CD8-positive, alpha-beta T cell (primary cell): ENCODE measurements at regions of chr19 and their contacts with region 1.

Region 1: GRCh38 chr19:55476100-55476775 is at the start of gene ZNF628:
- DNase-seq: peak; percentile 95 to 99 (median 98)
- ATAC-seq: peak; percentile 93
- H3K4me3 ChIP-seq: peak within 1 kb of the TSS; percentile 70 to 72
- H3K4me3 Mint-ChIP-seq: peak within 1 kb of the TSS; percentile 85
- H3K27ac ChIP-seq: peak within 1 kb of the TSS; percentile 58 to 91
- H3K27ac Mint-ChIP-seq: peak within 1 kb of the TSS; percentile 88
- H3K4me1 ChIP-seq: peaks cover 17% of the 10 kb centered on the region
- H3K4me1 Mint-ChIP-seq: peaks cover 34% of the 10 kb centered on the region
- H3K27me3 ChIP-seq: no peaks in the 10 kb centered on the region
- H3K27me3 Mint-ChIP-seq: no peaks in the 10 kb centered on the region
- CTCF ChIP-seq: no peak
- total RNA-seq, gene ZNF628: 27.0 to 27.8 TPM

Region 2: GRCh38 chr19:54463531-54464043 is 1012.7 kb before region 1 on chr19 and contains the start of gene LENG9:
- CTCF ChIA-PET with region 1: no interaction called
- POLR2A ChIA-PET with region 1: no interaction called
- intact Hi-C with region 1: loop called in 1 of 2 experiments (anchors 10 kb)
- DNase-seq: peak; percentile 81 to 100 (median 91)
- ATAC-seq: peak; percentile 70
- H3K4me3 ChIP-seq: peak within 1 kb of the TSS; percentile 79 to 83
- H3K4me3 Mint-ChIP-seq: peak within 1 kb of the TSS; percentile 86
- H3K27ac ChIP-seq: peak within 1 kb of the TSS; percentile 81 to 84
- H3K27ac Mint-ChIP-seq: peak within 1 kb of the TSS; percentile 93
- H3K4me1 ChIP-seq: peaks cover 20% of the 10 kb centered on the region
- H3K4me1 Mint-ChIP-seq: peaks cover 36% of the 10 kb centered on the region
- H3K27me3 ChIP-seq: no peaks in the 10 kb centered on the region
- H3K27me3 Mint-ChIP-seq: no peaks in the 10 kb centered on the region
- CTCF ChIP-seq: no peak
- total RNA-seq, gene LENG9: 2.3 to 2.7 TPM

Region 3: DNA sequence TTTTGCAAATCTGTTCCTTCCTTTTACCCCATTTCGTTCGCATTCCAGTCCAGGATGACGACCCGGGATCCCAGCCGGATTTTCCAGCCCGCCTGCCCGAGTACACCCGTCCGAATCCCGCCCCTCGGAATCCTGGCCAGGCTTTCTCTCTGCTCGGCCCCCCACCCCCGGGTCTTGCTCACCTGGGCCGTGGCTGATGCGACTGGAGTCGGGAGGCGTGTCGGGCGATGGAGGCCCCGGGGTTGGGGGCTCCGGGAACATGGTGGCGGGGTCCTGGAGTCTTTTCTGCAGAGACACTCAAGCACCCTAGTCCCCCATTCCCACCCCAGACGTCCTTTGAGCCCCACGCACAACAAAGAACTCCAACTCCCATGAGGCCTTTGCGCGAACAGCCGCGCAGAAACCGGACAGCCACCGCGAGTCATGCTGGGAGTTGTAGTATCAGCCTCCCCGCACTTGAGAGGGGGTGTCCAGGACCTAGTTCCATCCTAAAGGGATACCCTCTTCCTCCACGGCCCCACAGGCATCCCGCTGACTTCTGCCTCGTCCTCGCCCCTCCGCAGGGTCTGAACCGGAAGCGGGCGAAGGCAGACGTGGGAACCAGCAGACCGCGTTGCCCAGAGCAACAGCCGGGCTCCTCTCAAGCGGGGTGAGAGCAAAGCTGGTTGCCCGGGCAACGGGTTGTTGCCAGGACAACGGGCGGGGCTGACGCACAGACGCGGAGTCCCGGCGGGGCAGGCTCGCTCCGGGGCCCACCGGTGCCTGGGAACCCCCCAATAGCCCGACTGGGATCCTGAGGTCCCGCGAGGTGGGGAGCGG is 297.2 kb before region 1 on chr19:
- CTCF ChIA-PET with region 1: no interaction called
- POLR2A ChIA-PET with region 1: no interaction called
- intact Hi-C with region 1: loop called in 1 of 2 experiments (anchors 1 kb)
- DNase-seq: peak; percentile 87 to 99 (median 96)
- ATAC-seq: peak; percentile 79
- H3K4me3 ChIP-seq: peak overlapping the region; percentile 39 to 44
- H3K4me3 Mint-ChIP-seq: peak overlapping the region; percentile 75
- H3K27ac ChIP-seq: peak overlapping the region; percentile 45 to 61
- H3K27ac Mint-ChIP-seq: peak overlapping the region; percentile 79
- H3K4me1 ChIP-seq: peaks cover 27% of the 10 kb centered on the region
- H3K4me1 Mint-ChIP-seq: peaks cover 23% of the 10 kb centered on the region
- H3K27me3 ChIP-seq: peaks cover 43 to 67% of the 10 kb centered on the region in 2 experiments
- H3K27me3 Mint-ChIP-seq: peaks cover 68% of the 10 kb centered on the region
- CTCF ChIP-seq: no peak

Region 4: DNA sequence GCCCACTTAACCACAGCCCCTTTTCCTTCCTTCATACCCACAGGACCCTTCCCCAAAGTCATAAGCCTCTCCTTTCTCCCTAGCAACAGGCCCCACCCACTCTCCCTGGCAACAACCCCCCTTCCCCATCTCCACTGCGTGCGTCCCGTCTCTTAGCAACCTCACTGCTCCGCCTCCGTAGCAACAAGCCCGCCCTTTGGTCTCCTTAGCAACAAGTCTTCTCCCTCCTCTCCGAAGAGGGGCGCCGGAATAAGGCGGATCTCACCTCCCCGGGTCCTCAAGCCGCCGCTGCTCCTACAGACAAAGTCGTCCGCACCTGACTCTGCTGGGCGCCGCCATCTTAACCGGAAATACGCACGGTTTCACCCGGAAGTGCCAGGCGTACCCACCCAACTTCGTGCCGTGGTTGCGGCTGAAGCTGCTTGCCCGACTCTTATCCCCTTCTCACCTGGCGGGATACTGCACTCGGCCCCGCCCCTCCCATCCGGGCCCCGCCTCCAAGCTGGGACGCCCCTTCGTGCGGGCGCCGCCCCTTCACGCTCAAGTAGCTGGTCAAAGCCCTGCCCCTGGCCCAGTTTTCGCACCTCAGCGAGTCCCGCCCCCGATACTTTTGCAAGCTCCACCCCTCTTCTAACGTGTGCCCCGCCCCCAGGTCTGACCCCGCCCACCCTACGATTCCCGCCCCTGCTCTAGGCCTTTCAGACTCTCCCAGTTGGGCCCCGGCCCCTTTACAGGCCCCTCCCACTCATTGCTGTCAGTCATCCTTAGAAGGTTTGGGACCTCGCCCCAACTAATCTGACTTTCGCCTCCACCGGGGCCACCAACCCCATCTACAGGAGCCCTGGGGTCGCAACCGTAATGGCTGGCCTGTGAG is 196.2 kb before region 1 on chr19 and contains the start of gene HSPBP1:
- CTCF ChIA-PET with region 1: no interaction called
- POLR2A ChIA-PET with region 1: no interaction called
- intact Hi-C with region 1: loop called in 1 of 2 experiments (anchors 1 kb)
- DNase-seq: peak; percentile 87 to 98 (median 95)
- ATAC-seq: peak; percentile 86
- H3K4me3 ChIP-seq: peak within 1 kb of the TSS; percentile 73 to 85
- H3K4me3 Mint-ChIP-seq: peak within 1 kb of the TSS; percentile 96
- H3K27ac ChIP-seq: peak within 1 kb of the TSS; percentile 89 to 90
- H3K27ac Mint-ChIP-seq: peak within 1 kb of the TSS; percentile 98
- H3K4me1 ChIP-seq: peaks cover 32% of the 10 kb centered on the region
- H3K4me1 Mint-ChIP-seq: peaks cover 44% of the 10 kb centered on the region
- H3K27me3 ChIP-seq: no peaks in the 10 kb centered on the region
- H3K27me3 Mint-ChIP-seq: no peaks in the 10 kb centered on the region
- CTCF ChIP-seq: no peak
- total RNA-seq, gene HSPBP1: 18.8 to 18.9 TPM

Region 5: DNA sequence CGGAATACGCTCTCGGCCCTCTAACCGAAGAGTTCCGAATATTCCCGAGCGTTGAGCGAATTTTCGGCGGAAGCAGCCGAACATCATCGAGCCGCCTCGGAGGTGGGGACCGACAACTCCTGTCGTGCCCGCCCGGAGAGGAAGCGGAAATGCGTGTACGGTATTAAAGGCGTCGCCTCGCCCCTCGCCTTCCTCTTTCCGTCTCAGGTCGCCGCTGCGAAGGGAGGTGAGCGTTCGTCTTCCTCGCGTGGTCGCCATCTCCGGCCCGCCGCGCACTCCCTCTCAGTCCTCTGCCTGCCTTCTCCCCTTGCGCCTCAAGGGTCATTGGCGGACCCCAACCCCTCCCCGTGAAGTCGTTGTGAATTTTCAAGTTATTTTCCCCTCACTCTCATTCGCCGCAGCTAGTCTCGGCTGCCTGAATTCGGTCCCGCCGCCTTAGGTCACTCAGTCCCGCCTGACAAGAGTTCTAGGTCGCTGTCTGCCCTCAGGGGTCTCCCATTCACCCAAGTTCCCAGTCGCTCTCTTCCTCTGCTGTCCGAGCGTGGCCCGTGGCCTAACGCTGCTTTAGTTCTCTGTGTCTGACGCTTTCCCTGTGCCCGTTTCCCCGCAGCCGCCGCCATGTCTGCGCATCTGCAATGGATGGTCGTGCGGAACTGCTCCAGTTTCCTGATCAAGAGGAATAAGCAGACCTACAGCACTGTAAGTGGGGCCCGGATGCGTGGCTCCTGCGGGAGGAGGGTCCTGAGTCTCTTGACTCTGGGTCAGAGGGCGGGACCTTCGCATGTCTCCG is 90.3 kb before region 1 on chr19 and contains the start of gene RPL28:
- CTCF ChIA-PET with region 1: no interaction called
- POLR2A ChIA-PET with region 1: interaction called, 3 read pairs
- intact Hi-C with region 1: loop called in 1 of 2 experiments (anchors 1 kb)
- DNase-seq: peak; percentile 97 to 99 (median 99)
- ATAC-seq: peak; percentile 80
- H3K4me3 ChIP-seq: peak within 1 kb of the TSS; percentile 75 to 94
- H3K4me3 Mint-ChIP-seq: peak within 1 kb of the TSS; percentile 100
- H3K27ac ChIP-seq: peak within 1 kb of the TSS; percentile 95 to 97
- H3K27ac Mint-ChIP-seq: peak within 1 kb of the TSS; percentile 100
- H3K4me1 ChIP-seq: peaks cover 59% of the 10 kb centered on the region
- H3K4me1 Mint-ChIP-seq: peaks cover 75% of the 10 kb centered on the region
- H3K27me3 ChIP-seq: no peaks in the 10 kb centered on the region
- H3K27me3 Mint-ChIP-seq: no peaks in the 10 kb centered on the region
- CTCF ChIP-seq: no peak
- total RNA-seq, gene RPL28: 4,227 to 4,270 TPM

Region 6: GRCh38 chr19:55461259-55461973 is 14.8 kb before region 1 on chr19 and contains the start of gene ISOC2:
- CTCF ChIA-PET with region 1: interaction called, 46 read pairs
- POLR2A ChIA-PET with region 1: interaction called, 9 read pairs
- intact Hi-C with region 1: loop called (anchors 1 kb)
- DNase-seq: peak; percentile 100
- ATAC-seq: peak; percentile 96
- H3K4me3 ChIP-seq: peak within 1 kb of the TSS; percentile 90 to 95
- H3K4me3 Mint-ChIP-seq: peak within 1 kb of the TSS; percentile 83
- H3K27ac ChIP-seq: peak within 1 kb of the TSS; percentile 70 to 87
- H3K27ac Mint-ChIP-seq: peak within 1 kb of the TSS; percentile 58
- H3K4me1 ChIP-seq: peaks cover 17% of the 10 kb centered on the region
- H3K4me1 Mint-ChIP-seq: peaks cover 19% of the 10 kb centered on the region
- H3K27me3 ChIP-seq: no peaks in the 10 kb centered on the region
- H3K27me3 Mint-ChIP-seq: no peaks in the 10 kb centered on the region
- CTCF ChIP-seq: no peak
- total RNA-seq, gene ISOC2: 1.5 to 2.1 TPM

Region 7: DNA sequence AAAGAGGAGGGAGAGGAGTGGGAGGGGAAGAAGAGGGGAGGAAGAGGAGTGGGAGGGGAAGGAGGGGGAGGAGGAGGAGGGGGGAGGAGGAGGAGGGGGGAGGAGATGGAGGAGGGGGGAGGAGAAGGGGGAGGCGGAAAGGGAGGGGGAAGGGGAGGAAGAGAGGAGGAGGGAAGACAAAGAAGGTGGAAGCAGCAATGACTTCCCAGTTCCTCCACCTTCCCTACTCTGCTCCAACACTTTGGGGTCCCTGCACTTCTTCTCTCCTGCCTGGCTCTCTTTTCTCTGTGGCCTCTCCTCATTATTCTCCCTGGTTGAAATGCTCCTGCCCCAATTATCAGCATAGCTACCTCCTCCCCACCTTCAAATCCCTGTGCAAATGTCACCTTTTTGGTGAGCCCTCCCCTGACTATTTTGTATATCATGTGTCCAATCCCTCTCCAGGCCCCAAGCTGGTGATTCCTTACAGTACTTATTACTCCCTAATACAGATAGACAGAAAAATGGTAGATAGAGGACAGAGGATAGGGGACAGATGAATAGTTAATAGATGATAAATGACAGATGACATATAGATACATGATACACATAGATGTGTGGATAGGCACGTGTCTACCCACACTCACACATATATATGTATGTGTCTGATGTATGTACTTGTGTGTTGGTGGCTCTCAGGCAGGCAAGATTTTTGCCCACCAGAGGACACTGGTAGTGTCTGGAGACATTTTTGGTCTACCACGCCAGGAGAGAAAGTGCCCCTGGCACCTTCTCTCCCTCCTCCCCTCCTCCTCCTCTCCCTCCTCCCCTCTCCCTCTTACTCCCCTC is 236.8 kb after region 1 on chr19:
- CTCF ChIA-PET with region 1: no interaction called
- POLR2A ChIA-PET with region 1: no interaction called
- intact Hi-C with region 1: no loop called
- DNase-seq: no peak
- ATAC-seq: no peak
- H3K4me3 ChIP-seq: no peak overlapping the region
- H3K4me3 Mint-ChIP-seq: no peak overlapping the region
- H3K27ac ChIP-seq: no peak overlapping the region
- H3K27ac Mint-ChIP-seq: no peak overlapping the region
- H3K4me1 ChIP-seq: no peaks in the 10 kb centered on the region
- H3K4me1 Mint-ChIP-seq: no peaks in the 10 kb centered on the region
- H3K27me3 ChIP-seq: peaks cover 0 to 2% of the 10 kb centered on the region in 2 experiments
- H3K27me3 Mint-ChIP-seq: peaks cover 17% of the 10 kb centered on the region
- CTCF ChIP-seq: no peak

Region 8: DNA sequence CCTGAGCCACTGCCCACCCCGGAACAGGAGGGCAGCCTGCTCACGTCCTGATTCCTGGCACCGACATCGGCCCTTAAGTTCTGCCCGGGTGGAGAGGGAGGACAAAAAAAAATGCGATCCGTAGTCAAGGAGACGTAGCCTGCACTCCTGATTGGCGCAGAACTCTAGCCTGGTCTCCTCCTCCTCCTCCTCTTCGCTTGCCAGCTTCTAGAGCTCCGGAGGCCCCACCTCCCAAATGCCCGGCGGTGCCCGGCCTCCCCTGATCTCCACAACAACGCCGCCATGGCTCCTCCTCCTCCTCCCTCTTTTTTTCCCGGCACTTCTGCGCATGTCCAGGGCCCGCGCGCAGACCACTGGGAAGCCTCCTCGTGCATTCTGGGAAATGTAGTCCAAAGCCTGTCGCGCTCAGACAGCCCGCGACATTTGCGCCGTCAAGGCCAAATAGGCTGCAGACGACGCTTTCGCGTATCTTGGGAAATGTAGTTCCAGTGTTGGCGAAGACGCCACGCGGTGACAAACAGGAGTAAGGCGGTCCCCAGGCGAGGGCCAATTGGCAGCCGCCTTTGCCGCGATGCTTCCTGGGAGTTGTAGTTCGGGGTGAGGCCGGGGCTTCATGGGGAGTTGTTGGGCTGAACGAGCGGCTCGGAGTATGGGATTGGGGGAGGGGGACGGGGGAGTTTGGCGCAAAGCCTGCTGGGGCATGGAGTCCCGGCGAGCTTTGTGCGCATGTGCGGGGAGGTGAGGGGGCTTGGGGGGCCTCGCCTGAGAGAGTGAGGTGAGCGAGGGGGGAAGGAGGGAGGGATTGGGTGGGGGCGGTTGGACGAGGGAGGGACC is 664.6 kb after region 1 on chr19 and contains the start of gene ZNF444:
- CTCF ChIA-PET with region 1: no interaction called
- POLR2A ChIA-PET with region 1: no interaction called
- intact Hi-C with region 1: loop called in 1 of 2 experiments (anchors 2 kb)
- DNase-seq: peak; percentile 98 to 100 (median 99)
- ATAC-seq: peak; percentile 84
- H3K4me3 ChIP-seq: peak within 1 kb of the TSS; percentile 69 to 74
- H3K4me3 Mint-ChIP-seq: peak within 1 kb of the TSS; percentile 92
- H3K27ac ChIP-seq: peak within 1 kb of the TSS; percentile 66 to 86
- H3K27ac Mint-ChIP-seq: peak within 1 kb of the TSS; percentile 93
- H3K4me1 ChIP-seq: peaks cover 20% of the 10 kb centered on the region
- H3K4me1 Mint-ChIP-seq: peaks cover 38% of the 10 kb centered on the region
- H3K27me3 ChIP-seq: no peaks in the 10 kb centered on the region
- H3K27me3 Mint-ChIP-seq: no peaks in the 10 kb centered on the region
- CTCF ChIP-seq: no peak
- total RNA-seq, gene ZNF444: 17.2 to 18.6 TPM